Left cardiac atrium (tissue), 4 donors: ENCODE measurements at regions of chr14 and their contacts with region 1.

Region 1: DNA sequence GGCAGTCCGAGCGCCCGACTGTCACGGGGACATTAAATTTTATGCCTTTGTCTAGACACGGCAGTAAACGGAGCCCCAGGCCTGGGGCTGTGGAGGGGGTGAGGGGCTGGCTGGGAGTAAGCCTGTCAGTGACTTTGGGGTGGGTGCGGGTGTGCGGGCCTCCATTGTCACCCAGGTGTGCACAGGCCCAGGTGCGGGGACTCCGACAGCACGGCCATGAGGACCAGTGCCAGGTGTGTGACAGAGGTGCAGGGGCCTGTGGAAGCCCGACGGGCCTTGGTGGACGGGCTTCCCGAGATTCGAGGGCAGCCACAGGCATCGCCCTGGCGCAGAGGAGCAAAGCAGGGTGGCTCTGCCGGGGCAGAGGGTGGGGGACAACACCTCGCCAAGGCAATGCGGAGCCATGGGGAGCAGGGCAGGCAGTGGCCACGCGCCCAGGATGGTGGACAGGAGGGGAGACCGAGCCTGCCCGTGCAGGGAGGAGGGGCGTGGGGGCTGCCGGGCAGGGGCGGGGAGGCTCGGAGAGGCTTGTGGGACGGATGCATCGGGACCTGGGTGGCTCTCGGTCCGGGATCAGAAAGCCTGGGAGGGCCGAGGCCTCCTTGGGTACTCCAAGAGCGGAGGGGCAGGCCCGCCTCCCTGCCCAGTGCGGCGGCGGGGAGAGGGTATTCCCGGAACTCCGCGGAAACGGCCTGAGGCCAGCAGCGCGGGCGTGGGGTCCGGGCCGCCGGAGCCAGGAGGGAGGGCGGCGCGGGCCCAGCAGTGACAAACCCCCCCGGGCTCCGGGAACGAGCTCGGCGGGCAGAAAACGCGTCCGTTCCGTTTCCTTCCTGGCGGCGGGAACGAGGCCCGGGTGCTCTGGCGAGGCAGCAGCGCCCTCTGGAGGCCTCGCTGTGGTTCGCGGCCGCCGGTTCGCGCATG is 1.5 kb downstream of the TMEM121 start:
- DNase-seq: peak; percentile 84
- ATAC-seq: peak; percentile 78 to 79

Region 2: DNA sequence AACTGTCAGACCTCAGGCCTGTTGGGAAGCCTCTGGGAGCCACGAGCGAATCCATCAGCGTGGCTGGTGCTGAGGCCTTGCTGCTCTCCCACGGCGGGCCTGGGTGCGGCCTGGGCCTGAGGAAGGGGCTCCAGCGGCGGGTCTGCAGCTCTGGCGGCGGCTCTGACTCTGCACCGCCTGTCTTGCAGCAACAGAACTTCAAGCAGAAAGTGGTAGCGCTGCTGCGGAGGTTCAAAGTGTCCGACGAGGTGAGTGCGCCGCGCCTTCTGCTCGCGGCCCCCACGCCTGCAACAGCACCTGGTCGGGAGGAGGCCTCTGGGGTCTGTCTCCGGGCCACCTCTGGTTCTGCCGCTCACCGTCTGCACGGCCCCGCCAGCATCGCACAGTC is 158.3 kb before region 1 on chr14:
- intact Hi-C with region 1: loop called (anchors 2 to 10 kb)
- DNase-seq: no peak
- ATAC-seq: no peak

Region 3: GRCh38 chr14:105889701-105890473 is 362.0 kb after region 1 on chr14:
- intact Hi-C with region 1: no loop called
- DNase-seq: peak; percentile 10
- ATAC-seq: no peak